ENCODE measurements at regions of chr15 and their contacts with region 1.

Region 1: DNA sequence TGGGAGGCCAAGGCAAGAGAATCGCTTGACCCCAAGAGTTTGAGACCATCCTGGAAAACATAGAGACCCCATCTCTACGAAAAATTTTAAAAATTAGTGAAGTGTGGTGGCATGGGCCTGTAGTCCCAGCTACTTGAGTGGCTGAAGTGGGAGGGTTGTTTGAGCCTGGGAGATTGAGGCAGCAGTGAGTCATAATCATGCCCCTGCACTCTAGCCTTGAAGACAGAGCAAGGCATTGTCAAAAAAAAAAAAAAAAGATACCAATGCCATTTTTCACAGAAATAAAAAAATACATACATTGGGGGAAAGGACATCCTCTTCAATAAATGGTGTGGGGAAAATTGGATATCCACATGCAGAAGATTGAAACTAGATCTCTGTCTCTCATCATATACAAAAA is 74.6 kb downstream of the CERS3 start:
- DNase-seq: no peak
- H3K4me3 Mint-ChIP-seq: no peak overlapping the region
- H3K27ac Mint-ChIP-seq: no peak overlapping the region
- H3K4me1 Mint-ChIP-seq: no peaks in the 10 kb centered on the region
- H3K27me3 Mint-ChIP-seq: no peaks in the 10 kb centered on the region

Region 2: GRCh38 chr15:100400996-100401395 is 53.2 kb before region 1 on chr15:
- intact Hi-C with region 1: loop called (anchors 5 kb)
- DNase-seq: no peak
- H3K4me3 Mint-ChIP-seq: no peak overlapping the region
- H3K27ac Mint-ChIP-seq: no peak overlapping the region
- H3K4me1 Mint-ChIP-seq: no peaks in the 10 kb centered on the region
- H3K27me3 Mint-ChIP-seq: peaks cover 10% of the 10 kb centered on the region